ENCODE measurements at regions of chr7 and their contacts with region 1.

Region 1: DNA sequence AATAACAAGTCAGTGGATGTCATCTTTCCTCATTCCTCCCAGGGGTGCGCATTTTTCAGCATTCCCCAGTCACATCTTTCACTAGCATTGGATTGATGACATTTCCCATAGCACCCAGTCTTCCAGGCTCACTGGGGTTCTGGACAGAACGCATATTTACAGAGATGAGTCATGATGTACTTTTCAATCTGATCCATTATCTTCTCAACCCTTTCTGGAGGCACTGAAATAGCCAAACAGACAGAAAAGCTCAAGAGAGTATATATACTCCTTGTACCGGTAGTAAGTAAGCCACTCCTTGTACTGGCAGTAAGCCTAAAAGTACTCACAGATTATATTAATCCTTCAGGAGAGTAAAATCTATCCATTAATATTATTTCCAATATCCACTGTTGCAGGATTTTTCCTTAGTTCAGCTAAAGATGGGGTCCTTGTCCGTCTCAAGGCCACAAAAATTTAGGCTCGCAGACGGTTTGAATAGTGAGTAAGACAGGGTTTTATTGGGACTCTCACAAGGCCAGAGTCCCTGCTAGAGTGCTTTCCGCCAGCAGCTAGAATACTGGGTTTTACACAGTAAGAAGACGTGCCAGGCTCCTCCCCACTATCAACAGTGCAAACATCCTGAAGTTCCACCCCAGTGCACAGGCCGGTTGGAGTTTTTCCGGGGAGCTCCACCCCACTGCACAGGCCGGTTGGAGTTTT is 60.8 kb downstream of the MDH2 start:
- DNase-seq: no peak
- H3K4me3 ChIP-seq: no peak overlapping the region
- H3K27ac ChIP-seq: peak overlapping the region; percentile 58
- H3K4me1 ChIP-seq: peaks cover 21% of the 10 kb centered on the region
- H3K27me3 ChIP-seq: no peaks in the 10 kb centered on the region
- CTCF ChIP-seq: no peak
- POLR2A ChIP-seq: no peak

Region 2: DNA sequence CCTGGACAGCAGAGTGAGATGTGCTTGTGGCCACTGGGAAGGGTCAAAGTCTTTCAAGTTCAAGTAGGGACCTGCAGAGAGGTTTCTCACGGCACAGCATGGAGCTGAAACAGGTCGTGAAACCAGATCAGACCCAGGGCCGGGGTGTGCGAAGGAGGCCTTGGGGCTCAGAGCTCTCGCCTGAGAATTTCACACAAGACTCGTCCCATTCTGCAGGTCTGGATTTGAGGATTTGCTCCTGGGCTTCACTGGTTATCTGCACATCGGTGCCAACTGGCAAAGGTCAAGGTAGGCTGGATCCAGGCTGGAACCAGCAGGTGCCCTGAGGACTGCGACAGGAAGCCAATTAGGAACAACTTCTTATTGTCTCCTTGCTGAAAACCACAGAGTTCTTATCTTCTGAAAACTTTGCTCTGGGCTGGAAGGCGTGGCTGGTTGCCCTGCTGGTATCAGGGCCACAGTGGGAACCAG is 1475.2 kb before region 1 on chr7:
- intact Hi-C with region 1: loop called (anchors 5 kb)
- DNase-seq: no peak
- H3K4me3 ChIP-seq: no peak overlapping the region
- H3K27ac ChIP-seq: no peak overlapping the region
- H3K4me1 ChIP-seq: peaks cover 22% of the 10 kb centered on the region
- H3K27me3 ChIP-seq: no peaks in the 10 kb centered on the region
- CTCF ChIP-seq: no peak
- POLR2A ChIP-seq: no peak

Region 3: DNA sequence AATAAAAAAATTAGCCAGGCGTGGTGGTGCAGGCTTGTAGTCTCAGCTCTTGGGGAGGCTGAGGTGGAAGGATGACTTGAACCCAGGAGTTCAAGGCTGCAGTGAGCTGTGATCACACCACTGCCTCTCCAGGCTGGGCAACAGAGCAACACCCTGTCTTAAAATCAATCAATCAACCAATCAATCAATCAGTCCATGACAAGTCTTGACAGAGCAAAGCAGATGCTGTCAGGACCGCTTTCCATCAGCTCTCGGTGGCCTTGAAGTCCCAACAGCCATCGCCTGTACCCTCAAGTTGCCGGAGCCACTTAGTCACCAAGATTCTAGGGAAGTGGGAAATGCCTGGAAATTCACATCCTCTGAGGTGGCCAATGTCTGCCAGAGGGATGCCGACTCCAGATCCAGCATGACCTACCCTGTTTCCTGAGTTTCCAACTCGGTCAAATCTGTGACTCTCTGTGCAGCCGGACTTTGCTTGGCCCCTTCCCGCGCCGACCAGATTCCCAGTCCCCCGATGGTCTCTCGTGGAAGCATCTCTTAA is 294.2 kb before region 1 on chr7:
- intact Hi-C with region 1: no loop called
- DNase-seq: no peak
- H3K4me3 ChIP-seq: no peak overlapping the region
- H3K27ac ChIP-seq: no peak overlapping the region
- H3K4me1 ChIP-seq: no peaks in the 10 kb centered on the region
- H3K27me3 ChIP-seq: no peaks in the 10 kb centered on the region
- CTCF ChIP-seq: no peak
- POLR2A ChIP-seq: no peak

Measured in vagina (tissue), 2 donors.